ENCODE measurements at regions of chr1 and their contacts with region 1.

Region 1: GRCh38 chr1:152410599-152410998 is 3.5 kb downstream of the CRNN start:
- DNase-seq: no peak
- ATAC-seq: no peak
- H3K4me3 ChIP-seq: no peak overlapping the region
- H3K27ac ChIP-seq: no peak overlapping the region
- H3K4me1 ChIP-seq: no peaks in the 10 kb centered on the region
- H3K27me3 ChIP-seq: no peaks in the 10 kb centered on the region
- CTCF ChIP-seq: no peak
- POLR2A ChIP-seq: no peak

Region 2: GRCh38 chr1:152367434-152367833 is 43.2 kb before region 1 on chr1:
- intact Hi-C with region 1: loop called in 1 of 10 experiments (anchors 10 kb)
- DNase-seq: no peak
- ATAC-seq: no peak
- H3K4me3 ChIP-seq: no peak overlapping the region
- H3K27ac ChIP-seq: no peak overlapping the region
- H3K4me1 ChIP-seq: no peaks in the 10 kb centered on the region
- H3K27me3 ChIP-seq: no peaks in the 10 kb centered on the region
- CTCF ChIP-seq: no peak
- POLR2A ChIP-seq: no peak